ENCODE measurements at regions of chr7 and their contacts with region 1.

Region 1: GRCh38 chr7:47786557-47787248 is 161.6 kb downstream of the PKD1L1 start:
- DNase-seq: peak; percentile 98
- ATAC-seq: peak; percentile 86
- H3K4me3 ChIP-seq: peak overlapping the region; percentile 38
- H3K27ac ChIP-seq: peak overlapping the region; percentile 95
- H3K4me1 ChIP-seq: peaks cover 62% of the 10 kb centered on the region
- H3K27me3 ChIP-seq: no peaks in the 10 kb centered on the region
- CTCF ChIP-seq: no peak

Region 2: GRCh38 chr7:47605816-47606575 is 180.7 kb before region 1 on chr7:
- CTCF ChIA-PET with region 1: no interaction called
- POLR2A ChIA-PET with region 1: interaction called, 4 read pairs
- intact Hi-C with region 1: loop called (anchors 1 kb)
- DNase-seq: no peak
- ATAC-seq: no peak
- H3K4me3 ChIP-seq: no peak overlapping the region
- H3K27ac ChIP-seq: peak overlapping the region; percentile 87
- H3K4me1 ChIP-seq: peaks cover 40% of the 10 kb centered on the region
- H3K27me3 ChIP-seq: no peaks in the 10 kb centered on the region
- CTCF ChIP-seq: no peak

Region 3: DNA sequence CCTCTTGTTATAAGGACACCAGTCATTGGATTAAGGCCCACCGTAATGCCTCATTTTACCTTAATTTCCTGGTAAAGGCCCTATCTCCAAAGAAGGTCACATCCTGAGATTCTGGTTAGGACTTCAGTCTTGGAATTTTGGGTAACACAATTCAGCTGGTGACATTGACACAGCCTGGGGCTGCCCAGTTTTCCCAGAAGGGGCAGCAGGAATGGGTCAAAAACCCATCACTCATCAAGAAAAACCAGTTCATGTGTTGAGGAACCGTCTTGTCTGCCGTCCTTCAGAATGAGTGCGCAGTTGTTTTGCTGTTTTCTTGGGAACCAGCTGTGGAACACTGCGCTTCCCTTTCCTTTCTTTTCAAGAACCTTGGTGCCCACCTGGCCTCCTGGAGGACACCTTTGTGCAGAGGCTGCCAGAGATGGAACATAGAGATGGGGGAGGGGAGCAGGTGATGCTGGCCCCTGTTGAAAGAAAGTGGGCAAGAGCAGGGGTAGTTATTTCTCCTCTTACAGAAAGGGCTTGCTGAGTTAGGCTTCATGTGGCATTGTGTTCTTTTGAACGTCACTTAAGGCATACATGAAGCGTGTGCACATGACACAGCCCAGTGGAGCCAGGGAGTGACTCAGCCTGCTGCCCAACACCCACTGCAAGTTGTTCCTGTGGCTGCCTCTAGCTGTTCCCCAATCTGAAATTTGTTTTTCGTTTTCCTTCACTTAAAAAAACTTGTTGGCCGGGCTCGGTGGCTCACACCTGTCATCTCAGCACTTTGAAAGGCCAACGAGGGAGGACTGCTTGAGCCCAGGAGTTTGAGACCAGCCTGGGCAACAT is 117.4 kb before region 1 on chr7:
- CTCF ChIA-PET with region 1: no interaction called
- POLR2A ChIA-PET with region 1: no interaction called
- intact Hi-C with region 1: loop called (anchors 5 kb)
- DNase-seq: peak; percentile 92
- ATAC-seq: peak; percentile 100
- H3K4me3 ChIP-seq: no peak overlapping the region
- H3K27ac ChIP-seq: peak overlapping the region; percentile 78
- H3K4me1 ChIP-seq: peaks cover 14% of the 10 kb centered on the region
- H3K27me3 ChIP-seq: no peaks in the 10 kb centered on the region
- CTCF ChIP-seq: no peak

Region 4: GRCh38 chr7:47763063-47763974 is 23.4 kb before region 1 on chr7:
- CTCF ChIA-PET with region 1: interaction called, 4 read pairs
- POLR2A ChIA-PET with region 1: interaction called, 3 read pairs
- intact Hi-C with region 1: loop called (anchors 1 kb)
- DNase-seq: peak; percentile 90
- ATAC-seq: peak; percentile 90
- H3K4me3 ChIP-seq: peak overlapping the region; percentile 30; the same call in 1 of the 2 replicates
- H3K27ac ChIP-seq: peak overlapping the region; percentile 90
- H3K4me1 ChIP-seq: peaks cover 30% of the 10 kb centered on the region
- H3K27me3 ChIP-seq: no peaks in the 10 kb centered on the region
- CTCF ChIP-seq: no peak

Measured in PC-3 (cell line).